PC-3 (cell line): ENCODE measurements at regions of chr11 and their contacts with region 1.

Region 1: DNA sequence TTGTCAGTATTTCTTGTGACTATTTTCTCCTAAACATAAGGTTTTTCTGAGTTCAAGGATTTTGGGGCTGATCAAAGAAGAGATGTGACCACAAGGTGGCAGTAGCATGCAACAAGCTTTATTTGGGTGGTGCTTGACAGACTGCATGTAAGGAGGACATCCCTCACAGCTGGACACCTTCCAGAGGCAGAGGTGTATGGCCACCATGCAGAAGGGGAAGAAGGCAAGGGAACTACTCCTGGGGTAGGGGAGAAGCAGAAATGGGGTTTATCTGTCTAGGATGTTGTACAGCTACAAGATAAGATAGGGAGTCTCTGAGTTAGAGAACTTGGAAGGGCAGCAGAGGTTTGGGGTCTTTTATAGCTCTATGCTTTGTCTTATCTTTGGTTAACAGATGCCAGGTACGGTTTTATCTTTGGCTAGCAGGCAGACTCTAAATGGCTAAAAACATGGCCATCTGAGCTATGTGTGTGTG is 5.1 kb upstream of the BIRC2 start:
- DNase-seq: peak; percentile 93
- ATAC-seq: peak; percentile 52
- H3K4me3 ChIP-seq: no peak overlapping the region
- H3K27ac ChIP-seq: no peak overlapping the region
- H3K4me1 ChIP-seq: peaks cover 21% of the 10 kb centered on the region
- H3K27me3 ChIP-seq: no peaks in the 10 kb centered on the region
- CTCF ChIP-seq: peak; percentile 96

Region 2: GRCh38 chr11:102287964-102288724 is 53.7 kb before region 1 on chr11:
- CTCF ChIA-PET with region 1: no interaction called
- POLR2A ChIA-PET with region 1: no interaction called
- intact Hi-C with region 1: loop called (anchors 1 kb)
- DNase-seq: peak; percentile 96
- ATAC-seq: peak; percentile 70
- H3K4me3 ChIP-seq: peak overlapping the region; percentile 52
- H3K27ac ChIP-seq: peak overlapping the region; percentile 13
- H3K4me1 ChIP-seq: peaks cover 40% of the 10 kb centered on the region
- H3K27me3 ChIP-seq: no peaks in the 10 kb centered on the region
- CTCF ChIP-seq: peak; percentile 93

Region 3: GRCh38 chr11:102647430-102647829 is 305.5 kb after region 1 on chr11:
- CTCF ChIA-PET with region 1: no interaction called
- POLR2A ChIA-PET with region 1: no interaction called
- intact Hi-C with region 1: no loop called
- DNase-seq: peak; percentile 17
- ATAC-seq: peak; percentile 43; the same call in 1 of the 2 replicates
- H3K4me3 ChIP-seq: no peak overlapping the region
- H3K27ac ChIP-seq: no peak overlapping the region
- H3K4me1 ChIP-seq: no peaks in the 10 kb centered on the region
- H3K27me3 ChIP-seq: no peaks in the 10 kb centered on the region
- CTCF ChIP-seq: no peak